ENCODE measurements at regions of chr1 and their contacts with region 1.

Region 1: GRCh38 chr1:156445789-156446263 is 54.7 kb downstream of the MEF2D start:
- DNase-seq: peak in 1 of 2 experiments; percentile 96
- H3K4me3 ChIP-seq: no peak overlapping the region
- H3K27ac ChIP-seq: no peak overlapping the region
- H3K4me1 ChIP-seq: no peaks in the 10 kb centered on the region; a peak in 4 of 7 replicates
- H3K27me3 ChIP-seq: peaks cover 19 to 39% (median 33%) of the 10 kb centered on the region in 4 experiments
- CTCF ChIP-seq: peak; percentile 95 to 98 (median 96)
- EP300 ChIP-seq: no peak
- POLR2A ChIP-seq: no peak
- RAD21 ChIP-seq: peak; percentile 94 to 98

Region 2: GRCh38 chr1:156368889-156369684 is 76.7 kb before region 1 on chr1 and contains the start of gene RHBG:
- CTCF ChIA-PET with region 1: interaction called, 574 read pairs
- POLR2A ChIA-PET with region 1: no interaction called
- DNase-seq: peak in 1 of 2 experiments; percentile 88
- H3K4me3 ChIP-seq: peak within 1 kb of the TSS; percentile 52 to 66 (median 56)
- H3K27ac ChIP-seq: no peak within 1 kb of the TSS
- H3K4me1 ChIP-seq: peaks cover 0 to 7% (median 4%) of the 10 kb centered on the region in 4 experiments; a peak in 5 of 7 replicates
- H3K27me3 ChIP-seq: peaks cover 0 to 14% (median 11%) of the 10 kb centered on the region in 4 experiments; a peak in 6 of 7 replicates
- CTCF ChIP-seq: no peak
- EP300 ChIP-seq: no peak
- POLR2A ChIP-seq: peak in 1 of 2 experiments; percentile 44; a peak in 1 of 3 replicates
- RAD21 ChIP-seq: no peak
- total RNA-seq, gene RHBG: 2.2 and 2.6 TPM in 2 replicates

Region 3: DNA sequence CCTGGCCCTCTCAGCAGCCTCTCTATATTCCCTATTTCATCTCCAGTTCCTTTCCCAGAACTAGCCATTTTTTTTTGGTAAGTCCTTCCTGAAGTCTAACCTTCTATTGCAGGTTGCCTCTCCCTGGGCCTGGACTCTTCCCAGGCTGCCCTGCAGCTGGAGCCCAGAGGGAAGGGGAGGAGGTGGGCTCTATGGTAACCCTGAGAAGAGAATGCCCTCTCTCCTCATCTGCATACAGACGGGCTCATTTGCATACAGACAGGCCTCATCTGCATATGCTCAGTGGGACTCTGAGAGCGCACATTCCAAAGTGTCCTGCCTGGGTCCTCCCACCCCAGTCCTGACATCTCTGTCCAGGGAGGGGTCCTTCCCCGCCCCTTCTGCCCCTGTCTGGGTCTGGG is 44.1 kb before region 1 on chr1:
- CTCF ChIA-PET with region 1: interaction called, 17 read pairs
- POLR2A ChIA-PET with region 1: interaction called, 3 read pairs
- DNase-seq: no peak
- H3K4me3 ChIP-seq: no peak overlapping the region
- H3K27ac ChIP-seq: no peak overlapping the region
- H3K4me1 ChIP-seq: peaks cover 6 to 28% (median 23%) of the 10 kb centered on the region in 4 experiments
- H3K27me3 ChIP-seq: peaks cover 0 to 2% (median 0%) of the 10 kb centered on the region in 4 experiments; a peak in 2 of 7 replicates
- CTCF ChIP-seq: no peak
- EP300 ChIP-seq: no peak
- POLR2A ChIP-seq: no peak
- RAD21 ChIP-seq: no peak

Region 4: DNA sequence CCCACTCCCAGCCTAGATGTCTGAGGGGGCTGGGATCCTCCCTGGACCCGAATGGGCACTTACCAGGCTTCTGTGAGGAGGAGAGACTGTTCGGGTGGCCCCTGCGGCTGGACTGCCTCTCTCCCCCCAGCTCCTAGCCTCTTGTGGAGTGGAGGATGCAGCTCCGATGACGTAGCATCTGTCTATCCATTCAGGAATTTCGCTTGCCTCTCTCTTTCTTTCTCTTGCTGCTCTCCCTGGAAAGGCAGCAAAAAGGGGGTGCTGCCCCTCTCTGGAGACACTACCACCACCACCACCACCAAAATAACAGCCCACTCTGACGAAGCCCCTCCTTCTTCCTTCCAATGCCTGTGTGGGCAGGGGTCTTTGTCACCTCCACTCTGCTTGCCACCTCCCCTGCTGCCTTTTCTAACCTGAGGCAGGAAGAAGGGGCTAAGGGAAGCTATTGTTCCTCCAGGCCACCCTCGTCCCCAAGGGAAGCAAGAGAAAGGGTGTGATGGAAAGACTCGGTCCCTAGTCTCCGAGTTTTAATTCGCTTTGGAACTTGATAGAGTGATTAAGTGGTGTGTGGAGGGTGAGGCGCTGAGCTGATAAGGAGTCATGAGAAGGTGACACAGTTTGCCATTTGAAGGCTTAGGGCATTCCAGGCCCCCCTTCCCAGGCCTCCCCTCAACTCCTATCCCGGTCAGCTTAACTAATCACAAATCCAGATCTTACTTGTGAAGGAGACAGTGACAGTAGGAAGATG is 16.3 kb before region 1 on chr1:
- CTCF ChIA-PET with region 1: interaction called, 124 read pairs
- POLR2A ChIA-PET with region 1: interaction called, 23 read pairs
- DNase-seq: no peak
- H3K4me3 ChIP-seq: peak overlapping the region in 3 of 4 experiments; percentile 15 to 42 (median 17); a peak in 5 of 8 replicates
- H3K27ac ChIP-seq: no peak overlapping the region
- H3K4me1 ChIP-seq: peaks cover 14 to 30% (median 16%) of the 10 kb centered on the region in 4 experiments
- H3K27me3 ChIP-seq: peaks cover 72 to 100% (median 97%) of the 10 kb centered on the region in 4 experiments
- CTCF ChIP-seq: no peak
- EP300 ChIP-seq: no peak
- POLR2A ChIP-seq: no peak
- RAD21 ChIP-seq: no peak

Region 5: GRCh38 chr1:156480411-156481192 is 34.8 kb after region 1 on chr1:
- CTCF ChIA-PET with region 1: interaction called, 10 read pairs
- POLR2A ChIA-PET with region 1: no interaction called
- DNase-seq: peak in 1 of 2 experiments; percentile 88
- H3K4me3 ChIP-seq: no peak overlapping the region
- H3K27ac ChIP-seq: no peak overlapping the region
- H3K4me1 ChIP-seq: peaks cover 0 to 16% (median 11%) of the 10 kb centered on the region in 4 experiments; a peak in 6 of 7 replicates
- H3K27me3 ChIP-seq: no peaks in the 10 kb centered on the region
- CTCF ChIP-seq: peak; percentile 81 to 88 (median 84)
- EP300 ChIP-seq: 0 out of 3 replicates have a peak, but pooled peaks of 1 of the 2 experiments have one; percentile 31
- POLR2A ChIP-seq: no peak
- RAD21 ChIP-seq: peak; percentile 68 to 76

Measured in H1 (cell line).